Heart right ventricle (tissue), 16 donors: ENCODE measurements at regions of chr1 and their contacts with region 1.

Region 1: DNA sequence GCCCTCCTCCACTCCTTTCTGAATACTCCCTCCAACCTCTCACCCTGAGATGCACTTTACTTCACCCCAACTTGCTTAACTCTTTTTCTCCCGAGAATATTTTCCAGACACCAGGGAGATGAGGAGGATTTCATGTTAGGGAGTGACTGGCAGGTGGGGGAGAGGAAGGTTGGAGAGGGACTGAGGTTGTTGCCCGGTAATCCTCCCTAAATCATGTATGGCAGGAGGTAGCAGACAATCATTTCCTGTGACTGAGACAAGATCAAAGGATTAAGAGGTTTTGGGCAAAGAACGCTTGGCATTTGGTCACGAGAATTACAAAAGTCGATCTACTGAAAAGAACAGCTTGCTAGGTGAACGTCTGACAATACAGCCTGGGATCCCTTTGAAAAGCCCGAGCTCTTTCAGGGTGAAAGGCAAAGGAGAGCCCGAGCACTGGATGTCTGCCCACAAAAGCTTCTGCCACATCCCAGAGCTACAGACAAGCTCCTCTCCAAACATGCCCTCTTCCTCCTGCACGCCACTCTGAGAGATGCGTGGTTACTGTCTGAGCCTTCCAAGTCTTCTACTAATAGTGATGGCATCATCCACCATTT is 154.1 kb downstream of the DAB1 start:
- DNase-seq: no peak
- ATAC-seq: no peak
- H3K4me3 ChIP-seq: no peak overlapping the region
- H3K27ac ChIP-seq: no peak overlapping the region
- H3K4me1 ChIP-seq: no peaks in the 10 kb centered on the region
- H3K27me3 ChIP-seq: no peaks in the 10 kb centered on the region
- CTCF ChIP-seq: no peak

Region 2: GRCh38 chr1:57258557-57259325 is 11.0 kb before region 1 on chr1:
- intact Hi-C with region 1: loop called in 1 of 10 experiments (anchors 1 kb)
- DNase-seq: no peak
- ATAC-seq: no peak
- H3K4me3 ChIP-seq: no peak overlapping the region
- H3K27ac ChIP-seq: no peak overlapping the region
- H3K4me1 ChIP-seq: no peaks in the 10 kb centered on the region
- H3K27me3 ChIP-seq: no peaks in the 10 kb centered on the region
- CTCF ChIP-seq: no peak